CD4-positive, alpha-beta memory T cell (primary cell): ENCODE measurements at regions of chr3 and their contacts with region 1.

Region 1: GRCh38 chr3:108835101-108835500 is 12.5 kb downstream of the TRAT1 start:
- DNase-seq: peak; percentile 61 to 85 (median 72)
- H3K4me3 ChIP-seq: peak overlapping the region; percentile 3 to 48
- H3K4me3 Mint-ChIP-seq: peak overlapping the region; percentile 77 to 90 (median 86)
- H3K27ac ChIP-seq: peak overlapping the region; percentile 57
- H3K27ac Mint-ChIP-seq: peak overlapping the region; percentile 68 to 94 (median 89)
- H3K4me1 ChIP-seq: peaks cover 95% of the 10 kb centered on the region
- H3K4me1 Mint-ChIP-seq: peaks cover 71 to 95% (median 79%) of the 10 kb centered on the region in 4 donors
- H3K27me3 ChIP-seq: no peaks in the 10 kb centered on the region
- H3K27me3 Mint-ChIP-seq: no peaks in the 10 kb centered on the region

Region 2: DNA sequence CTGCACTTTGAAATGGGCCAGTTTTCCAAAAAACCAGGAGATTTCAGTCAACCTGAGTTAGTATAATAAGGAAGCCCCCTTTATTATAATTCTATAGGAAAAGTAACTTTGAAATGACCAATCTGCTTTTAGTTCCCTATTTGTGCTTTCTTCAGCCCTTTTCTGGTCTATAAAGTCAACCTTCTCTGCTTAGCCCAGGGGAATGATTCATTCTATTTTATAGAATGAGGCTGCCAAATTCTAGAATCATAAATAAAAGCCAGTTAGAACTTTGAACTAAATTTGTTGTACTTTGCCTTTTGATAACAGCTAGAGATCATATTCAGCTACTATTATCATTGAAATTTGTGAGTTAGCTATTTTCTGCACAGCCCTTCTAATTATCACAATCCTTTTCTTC is 270.5 kb before region 1 on chr3:
- CTCF ChIA-PET with region 1: no interaction called
- POLR2A ChIA-PET with region 1: no interaction called
- intact Hi-C with region 1: no loop called
- DNase-seq: no peak
- H3K4me3 ChIP-seq: no peak overlapping the region
- H3K4me3 Mint-ChIP-seq: no peak overlapping the region
- H3K27ac ChIP-seq: no peak overlapping the region
- H3K27ac Mint-ChIP-seq: peak overlapping the region in 2 of 7 donors; percentile 0 to 28
- H3K4me1 ChIP-seq: no peaks in the 10 kb centered on the region
- H3K4me1 Mint-ChIP-seq: peaks cover 0 to 2% (median 0%) of the 10 kb centered on the region in 4 donors
- H3K27me3 ChIP-seq: no peaks in the 10 kb centered on the region
- H3K27me3 Mint-ChIP-seq: no peaks in the 10 kb centered on the region

Region 3: GRCh38 chr3:108602249-108602934 is 232.7 kb before region 1 on chr3:
- CTCF ChIA-PET with region 1: interaction called, 4 read pairs
- POLR2A ChIA-PET with region 1: interaction called, 13 read pairs
- intact Hi-C with region 1: no loop called
- DNase-seq: peak; percentile 38 to 63 (median 50)
- H3K4me3 ChIP-seq: peak overlapping the region in 1 of 2 donors; percentile 27
- H3K4me3 Mint-ChIP-seq: peak overlapping the region; percentile 54 to 86 (median 82)
- H3K27ac ChIP-seq: peak overlapping the region; percentile 56
- H3K27ac Mint-ChIP-seq: peak overlapping the region; percentile 63 to 99 (median 91)
- H3K4me1 ChIP-seq: peaks cover 59% of the 10 kb centered on the region
- H3K4me1 Mint-ChIP-seq: peaks cover 37 to 68% (median 43%) of the 10 kb centered on the region in 4 donors
- H3K27me3 ChIP-seq: no peaks in the 10 kb centered on the region
- H3K27me3 Mint-ChIP-seq: no peaks in the 10 kb centered on the region

Region 4: DNA sequence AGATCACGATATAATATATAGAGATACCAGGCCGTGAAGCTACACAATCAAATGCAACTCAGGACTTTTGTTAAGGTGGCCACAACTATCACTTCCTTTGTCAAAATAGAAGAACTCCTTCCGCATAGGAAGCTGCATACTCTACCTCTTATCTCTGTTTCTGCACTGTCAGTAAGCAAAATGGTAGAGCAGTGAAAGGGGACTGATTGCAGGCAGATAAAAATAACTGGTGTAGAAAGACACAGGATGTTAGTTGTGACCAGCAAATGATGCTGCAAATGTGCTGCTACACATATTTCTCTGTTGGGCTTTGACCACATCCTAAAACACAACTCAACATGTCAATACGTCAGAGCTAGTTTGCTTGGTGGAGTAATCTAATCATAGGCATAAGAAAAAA is 28.8 kb before region 1 on chr3:
- CTCF ChIA-PET with region 1: interaction called, 5 read pairs
- POLR2A ChIA-PET with region 1: interaction called, 35 read pairs
- intact Hi-C with region 1: no loop called
- DNase-seq: peak; percentile 80 to 90 (median 83)
- H3K4me3 ChIP-seq: no peak overlapping the region
- H3K4me3 Mint-ChIP-seq: peak overlapping the region in 7 of 8 donors; percentile 4 to 73 (median 57)
- H3K27ac ChIP-seq: peak overlapping the region; percentile 35
- H3K27ac Mint-ChIP-seq: peak overlapping the region; percentile 79 to 93 (median 91)
- H3K4me1 ChIP-seq: peaks cover 18% of the 10 kb centered on the region
- H3K4me1 Mint-ChIP-seq: peaks cover 15 to 27% (median 21%) of the 10 kb centered on the region in 4 donors
- H3K27me3 ChIP-seq: no peaks in the 10 kb centered on the region
- H3K27me3 Mint-ChIP-seq: no peaks in the 10 kb centered on the region

Region 5: GRCh38 chr3:108845709-108846293 is 10.7 kb after region 1 on chr3:
- CTCF ChIA-PET with region 1: interaction called, 5 read pairs
- POLR2A ChIA-PET with region 1: interaction called, 6 read pairs
- intact Hi-C with region 1: loop called (anchors 1 kb)
- DNase-seq: no peak
- H3K4me3 ChIP-seq: no peak overlapping the region
- H3K4me3 Mint-ChIP-seq: peak overlapping the region in 6 of 8 donors; percentile 32 to 69 (median 41)
- H3K27ac ChIP-seq: no peak overlapping the region
- H3K27ac Mint-ChIP-seq: peak overlapping the region; percentile 25 to 60 (median 57)
- H3K4me1 ChIP-seq: peaks cover 78% of the 10 kb centered on the region
- H3K4me1 Mint-ChIP-seq: peaks cover 52 to 85% (median 67%) of the 10 kb centered on the region in 4 donors
- H3K27me3 ChIP-seq: no peaks in the 10 kb centered on the region
- H3K27me3 Mint-ChIP-seq: no peaks in the 10 kb centered on the region

Region 6: GRCh38 chr3:108862865-108863798 is 28.0 kb after region 1 on chr3:
- CTCF ChIA-PET with region 1: no interaction called
- POLR2A ChIA-PET with region 1: interaction called, 10 read pairs
- intact Hi-C with region 1: loop called (anchors 2 kb)
- DNase-seq: peak; percentile 20 to 52 (median 36)
- H3K4me3 ChIP-seq: no peak overlapping the region
- H3K4me3 Mint-ChIP-seq: peak overlapping the region in 7 of 8 donors; percentile 8 to 69 (median 44)
- H3K27ac ChIP-seq: peak overlapping the region; percentile 55
- H3K27ac Mint-ChIP-seq: peak overlapping the region; percentile 65 to 94 (median 90)
- H3K4me1 ChIP-seq: peaks cover 37% of the 10 kb centered on the region
- H3K4me1 Mint-ChIP-seq: peaks cover 39 to 57% (median 43%) of the 10 kb centered on the region in 4 donors
- H3K27me3 ChIP-seq: no peaks in the 10 kb centered on the region
- H3K27me3 Mint-ChIP-seq: no peaks in the 10 kb centered on the region